Caco-2 (cell line): ENCODE measurements at regions of chr3 and their contacts with region 1.

Region 1: DNA sequence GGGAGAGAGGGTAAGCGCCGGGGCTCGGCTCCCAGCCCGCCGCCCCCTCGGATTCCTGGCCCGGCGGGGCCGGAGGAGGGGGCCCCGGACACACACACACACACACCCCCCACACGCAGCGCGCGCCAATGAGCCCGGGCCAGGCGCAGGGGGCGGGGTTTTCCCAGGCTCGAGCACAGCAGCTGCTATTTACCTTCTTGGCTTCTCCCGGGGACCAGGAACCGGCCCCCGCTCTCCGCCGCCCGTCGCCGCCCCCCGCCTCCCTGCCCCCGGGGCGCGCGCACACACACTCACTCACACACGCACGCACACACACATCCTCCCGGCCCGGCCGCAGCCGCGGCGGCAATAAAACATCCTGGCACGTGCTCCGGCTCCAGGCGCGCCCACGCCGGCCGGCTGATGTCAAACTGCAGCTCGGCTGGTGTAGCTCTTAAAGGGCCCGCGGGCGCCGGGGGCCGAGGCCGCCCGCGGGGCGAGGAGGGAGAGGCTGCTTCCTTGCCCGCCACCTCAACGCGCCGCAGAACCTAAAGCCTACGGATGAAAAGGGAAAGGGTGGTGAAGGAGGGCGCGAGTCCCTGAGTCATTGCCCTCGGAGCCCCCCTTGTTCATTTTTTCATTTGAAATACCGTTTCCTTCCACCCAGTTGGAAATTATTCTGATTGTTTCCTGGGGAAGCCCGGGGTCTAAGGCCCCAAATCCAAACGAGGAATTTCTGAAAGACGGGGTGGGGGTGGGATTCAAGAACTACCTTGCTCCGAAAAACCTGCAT is 1.0 kb upstream of the HES1 start:
- DNase-seq: peak; percentile 98
- H3K4me3 ChIP-seq: peak overlapping the region; percentile 61
- H3K4me3 Mint-ChIP-seq: peak overlapping the region; percentile 88
- H3K27ac Mint-ChIP-seq: peak overlapping the region; percentile 41
- H3K4me1 ChIP-seq: peaks cover 37% of the 10 kb centered on the region
- H3K4me1 Mint-ChIP-seq: peaks cover 32% of the 10 kb centered on the region
- H3K27me3 ChIP-seq: no peaks in the 10 kb centered on the region
- H3K27me3 Mint-ChIP-seq: no peaks in the 10 kb centered on the region
- CTCF ChIP-seq: no peak

Region 2: GRCh38 chr3:193665370-193665989 is 469.5 kb before region 1 on chr3:
- CTCF ChIA-PET with region 1: interaction called, 6 read pairs
- POLR2A ChIA-PET with region 1: no interaction called
- intact Hi-C with region 1: loop called (anchors 2 kb)
- DNase-seq: peak in 1 of 2 experiments; percentile 6
- H3K4me3 ChIP-seq: no peak overlapping the region
- H3K4me3 Mint-ChIP-seq: no peak overlapping the region
- H3K27ac Mint-ChIP-seq: no peak overlapping the region
- H3K4me1 ChIP-seq: no peaks in the 10 kb centered on the region
- H3K4me1 Mint-ChIP-seq: no peaks in the 10 kb centered on the region
- H3K27me3 ChIP-seq: no peaks in the 10 kb centered on the region
- H3K27me3 Mint-ChIP-seq: no peaks in the 10 kb centered on the region
- CTCF ChIP-seq: peak in 1 of 2 experiments; percentile 53

Region 3: GRCh38 chr3:193842029-193842798 is 292.7 kb before region 1 on chr3:
- CTCF ChIA-PET with region 1: interaction called, 4 read pairs
- POLR2A ChIA-PET with region 1: interaction called, 11 read pairs
- intact Hi-C with region 1: loop called (anchors 2 kb)
- DNase-seq: peak in 1 of 2 experiments; percentile 48
- H3K4me3 ChIP-seq: peak overlapping the region; percentile 37
- H3K4me3 Mint-ChIP-seq: peak overlapping the region; percentile 73
- H3K27ac Mint-ChIP-seq: peak overlapping the region; percentile 92
- H3K4me1 ChIP-seq: peaks cover 77% of the 10 kb centered on the region
- H3K4me1 Mint-ChIP-seq: peaks cover 50% of the 10 kb centered on the region
- H3K27me3 ChIP-seq: no peaks in the 10 kb centered on the region
- H3K27me3 Mint-ChIP-seq: no peaks in the 10 kb centered on the region
- CTCF ChIP-seq: no peak

Region 4: GRCh38 chr3:193971261-193971751 is 163.6 kb before region 1 on chr3:
- CTCF ChIA-PET with region 1: no interaction called
- POLR2A ChIA-PET with region 1: no interaction called
- intact Hi-C with region 1: loop called (anchors 1 kb)
- DNase-seq: no peak
- H3K4me3 ChIP-seq: no peak overlapping the region
- H3K4me3 Mint-ChIP-seq: no peak overlapping the region
- H3K27ac Mint-ChIP-seq: no peak overlapping the region
- H3K4me1 ChIP-seq: peaks cover 28% of the 10 kb centered on the region
- H3K4me1 Mint-ChIP-seq: peaks cover 33% of the 10 kb centered on the region
- H3K27me3 ChIP-seq: no peaks in the 10 kb centered on the region
- H3K27me3 Mint-ChIP-seq: no peaks in the 10 kb centered on the region
- CTCF ChIP-seq: no peak

Region 5: DNA sequence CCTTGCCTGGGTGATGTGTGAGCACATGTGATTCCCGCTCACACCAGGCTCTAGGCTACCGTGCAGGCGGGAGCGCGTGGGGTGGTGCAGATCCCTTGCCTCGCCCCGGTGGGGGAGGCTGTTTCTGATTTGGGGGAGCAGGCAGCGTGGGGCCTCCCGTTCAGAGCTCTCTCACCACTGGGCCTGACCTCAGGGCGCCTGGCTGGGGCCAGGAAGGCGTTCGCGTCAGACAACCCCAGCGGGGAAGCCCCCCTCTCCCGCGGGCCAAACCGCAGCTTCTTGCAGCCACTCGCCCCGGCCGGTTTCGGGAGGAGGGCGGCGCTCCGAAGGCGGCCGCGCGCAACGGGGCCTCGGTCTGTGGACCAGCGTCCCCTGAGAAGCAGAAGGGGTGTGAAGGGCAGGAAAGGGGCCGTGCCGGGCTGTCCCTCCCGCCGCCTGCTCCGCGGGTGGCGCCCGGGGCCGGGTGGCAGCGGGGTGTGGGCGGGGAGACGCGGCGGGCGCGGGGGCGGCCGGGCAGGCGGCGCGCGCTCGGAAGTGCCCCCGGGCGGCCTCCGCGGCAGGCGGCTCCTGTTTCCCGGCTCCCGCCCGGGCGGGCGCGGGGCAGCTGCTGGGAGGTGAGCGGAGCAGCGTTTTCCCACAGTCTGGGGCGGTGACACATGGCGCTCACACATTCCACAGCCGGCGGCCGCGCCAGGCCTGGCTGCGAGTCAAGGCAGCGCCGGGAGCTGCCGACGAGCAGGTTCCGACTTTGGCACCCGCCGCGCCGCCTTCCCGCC is 64.1 kb before region 1 on chr3:
- CTCF ChIA-PET with region 1: interaction called, 6 read pairs
- POLR2A ChIA-PET with region 1: interaction called, 17 read pairs
- intact Hi-C with region 1: loop called (anchors 2 kb)
- DNase-seq: peak; percentile 87 to 89
- H3K4me3 ChIP-seq: peak overlapping the region; percentile 52
- H3K4me3 Mint-ChIP-seq: peak overlapping the region; percentile 88
- H3K27ac Mint-ChIP-seq: peak overlapping the region; percentile 94
- H3K4me1 ChIP-seq: peaks cover 44% of the 10 kb centered on the region
- H3K4me1 Mint-ChIP-seq: peaks cover 33% of the 10 kb centered on the region
- H3K27me3 ChIP-seq: no peaks in the 10 kb centered on the region
- H3K27me3 Mint-ChIP-seq: no peaks in the 10 kb centered on the region
- CTCF ChIP-seq: no peak

Region 6: DNA sequence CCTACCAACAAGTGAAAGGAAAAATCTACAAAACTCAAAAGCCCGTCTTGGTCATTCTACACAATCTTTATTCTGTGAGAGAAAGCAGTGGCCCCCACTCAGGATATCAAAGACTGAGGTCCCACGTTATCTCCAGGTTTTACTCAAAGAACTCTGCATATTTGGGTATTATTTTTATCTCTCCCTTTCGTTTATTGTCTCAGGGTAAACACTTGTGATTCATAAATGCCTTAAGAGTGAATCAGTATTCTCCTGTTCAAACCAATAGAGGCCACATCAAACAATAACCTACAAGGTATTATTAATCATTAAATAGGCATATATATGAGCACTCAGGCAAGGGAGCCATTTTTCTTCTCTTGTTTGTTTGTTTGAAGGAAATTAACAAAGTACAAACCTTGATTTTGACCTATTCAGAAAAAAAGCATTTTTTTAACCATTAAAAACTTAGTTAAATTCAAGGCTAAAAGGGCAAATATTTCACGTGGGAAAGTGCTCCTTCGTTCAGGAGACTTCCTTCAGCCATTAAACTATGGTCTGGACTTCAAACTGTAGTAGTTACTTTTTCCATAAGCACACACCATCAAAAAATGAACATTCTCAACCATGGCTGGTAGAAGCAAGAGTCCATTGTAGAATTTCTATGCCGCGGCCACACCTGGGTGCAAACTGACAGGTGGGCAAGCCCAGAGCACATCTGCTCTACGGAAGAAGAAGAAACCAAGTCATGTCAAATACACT is 12.9 kb before region 1 on chr3:
- CTCF ChIA-PET with region 1: interaction called, 3 read pairs
- POLR2A ChIA-PET with region 1: interaction called, 25 read pairs
- intact Hi-C with region 1: loop called (anchors 1 kb)
- DNase-seq: peak; percentile 70 to 72
- H3K4me3 ChIP-seq: no peak overlapping the region
- H3K4me3 Mint-ChIP-seq: peak overlapping the region; percentile 56
- H3K27ac Mint-ChIP-seq: peak overlapping the region; percentile 89
- H3K4me1 ChIP-seq: peaks cover 82% of the 10 kb centered on the region
- H3K4me1 Mint-ChIP-seq: peaks cover 72% of the 10 kb centered on the region
- H3K27me3 ChIP-seq: no peaks in the 10 kb centered on the region
- H3K27me3 Mint-ChIP-seq: no peaks in the 10 kb centered on the region
- CTCF ChIP-seq: no peak